CD4-positive, alpha-beta memory T cell (primary cell): ENCODE measurements at regions of chr6 and their contacts with region 1.

Region 1: GRCh38 chr6:137313928-137314855 is 95.0 kb upstream of the IFNGR1 start:
- DNase-seq: peak; percentile 47 to 66 (median 52)
- H3K4me3 ChIP-seq: no peak overlapping the region
- H3K4me3 Mint-ChIP-seq: no peak overlapping the region
- H3K27ac ChIP-seq: no peak overlapping the region
- H3K27ac Mint-ChIP-seq: peak overlapping the region in 1 of 7 donors; percentile 3
- H3K4me1 ChIP-seq: peaks cover 10% of the 10 kb centered on the region
- H3K4me1 Mint-ChIP-seq: peaks cover 2 to 12% (median 9%) of the 10 kb centered on the region in 4 donors
- H3K27me3 ChIP-seq: no peaks in the 10 kb centered on the region
- H3K27me3 Mint-ChIP-seq: no peaks in the 10 kb centered on the region

Region 2: GRCh38 chr6:136967876-136968752 is 346.1 kb before region 1 on chr6:
- CTCF ChIA-PET with region 1: interaction called, 4 read pairs
- POLR2A ChIA-PET with region 1: no interaction called
- intact Hi-C with region 1: loop called (anchors 1 kb)
- DNase-seq: peak in 4 of 5 donors; percentile 38 to 51 (median 46)
- H3K4me3 ChIP-seq: no peak overlapping the region
- H3K4me3 Mint-ChIP-seq: peak overlapping the region in 1 of 8 donors; percentile 17
- H3K27ac ChIP-seq: no peak overlapping the region
- H3K27ac Mint-ChIP-seq: peak overlapping the region in 1 of 7 donors; percentile 68
- H3K4me1 ChIP-seq: no peaks in the 10 kb centered on the region
- H3K4me1 Mint-ChIP-seq: peaks cover 0 to 10% (median 6%) of the 10 kb centered on the region in 4 donors
- H3K27me3 ChIP-seq: no peaks in the 10 kb centered on the region
- H3K27me3 Mint-ChIP-seq: peaks cover 10 to 32% of the 10 kb centered on the region in 2 donors

Region 3: GRCh38 chr6:137089305-137089704 is 224.9 kb before region 1 on chr6:
- CTCF ChIA-PET with region 1: interaction called, 62 read pairs
- POLR2A ChIA-PET with region 1: interaction called, 7 read pairs
- intact Hi-C with region 1: loop called (anchors 1 kb)
- DNase-seq: no peak
- H3K4me3 ChIP-seq: no peak overlapping the region
- H3K4me3 Mint-ChIP-seq: no peak overlapping the region
- H3K27ac ChIP-seq: no peak overlapping the region
- H3K27ac Mint-ChIP-seq: no peak overlapping the region
- H3K4me1 ChIP-seq: peaks cover 2% of the 10 kb centered on the region
- H3K4me1 Mint-ChIP-seq: peaks cover 0 to 2% (median under 1%) of the 10 kb centered on the region in 4 donors
- H3K27me3 ChIP-seq: no peaks in the 10 kb centered on the region
- H3K27me3 Mint-ChIP-seq: peaks cover 4 to 6% of the 10 kb centered on the region in 2 donors

Region 4: DNA sequence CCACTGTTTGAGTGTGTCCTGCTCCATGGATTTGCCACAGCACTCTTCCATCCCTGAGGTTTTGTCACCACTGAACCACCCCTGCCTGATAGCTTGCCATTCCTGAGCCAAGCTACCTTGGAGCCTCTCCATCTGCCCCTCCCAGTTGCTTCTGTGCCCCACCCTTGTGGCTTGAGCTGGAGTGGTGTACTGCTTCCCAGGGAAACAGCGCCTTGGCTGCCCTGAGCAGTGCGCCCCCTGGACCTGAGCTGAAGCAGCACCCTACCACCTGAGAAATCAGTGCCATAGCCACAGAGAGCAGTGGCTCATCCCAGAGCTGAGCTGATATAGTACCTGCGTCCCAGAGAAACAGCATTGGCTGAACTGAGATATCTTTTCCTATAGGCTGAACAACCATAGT is 181.1 kb before region 1 on chr6:
- CTCF ChIA-PET with region 1: interaction called, 13 read pairs
- POLR2A ChIA-PET with region 1: no interaction called
- intact Hi-C with region 1: no loop called
- DNase-seq: no peak
- H3K4me3 ChIP-seq: no peak overlapping the region
- H3K4me3 Mint-ChIP-seq: no peak overlapping the region
- H3K27ac ChIP-seq: no peak overlapping the region
- H3K27ac Mint-ChIP-seq: no peak overlapping the region
- H3K4me1 ChIP-seq: no peaks in the 10 kb centered on the region
- H3K4me1 Mint-ChIP-seq: no peaks in the 10 kb centered on the region
- H3K27me3 ChIP-seq: no peaks in the 10 kb centered on the region
- H3K27me3 Mint-ChIP-seq: peaks cover 3 to 9% of the 10 kb centered on the region in 2 donors

Region 5: DNA sequence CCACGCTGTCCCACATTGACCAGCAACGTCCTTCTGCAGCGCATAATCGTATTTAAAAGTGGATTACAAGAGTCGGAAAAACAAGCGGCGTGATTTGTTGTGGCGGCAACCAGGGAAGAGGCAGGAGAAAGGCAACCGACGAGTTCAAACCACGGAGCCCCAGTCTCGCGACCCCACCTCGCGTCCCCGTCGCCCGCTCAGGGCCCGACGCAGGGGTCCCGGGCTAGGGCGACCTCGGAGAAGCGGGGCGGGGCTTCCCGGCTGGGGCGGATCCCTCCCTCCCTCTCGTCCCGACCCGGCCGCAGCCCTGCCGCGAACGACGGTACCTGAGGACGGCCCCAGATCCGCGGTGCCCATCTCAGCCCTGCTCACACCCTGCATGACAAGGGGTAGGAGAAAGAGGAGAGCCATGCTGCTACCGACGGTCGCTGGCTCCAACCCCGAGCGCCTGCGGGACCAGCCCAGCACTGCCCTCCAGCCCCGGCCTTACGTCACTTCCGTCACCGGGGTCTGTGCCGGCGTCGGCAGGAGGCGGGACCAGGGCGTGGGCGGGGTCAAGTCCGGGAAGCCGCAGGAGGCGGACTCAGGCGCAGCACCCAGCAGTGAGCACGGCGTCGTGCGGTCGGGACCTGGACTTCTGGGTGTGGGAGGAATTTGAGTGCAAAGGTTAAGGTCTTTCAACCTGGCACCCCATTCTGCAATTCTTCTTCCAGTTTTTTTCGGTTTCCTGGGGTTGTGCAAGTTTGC is 95.1 kb before region 1 on chr6 and contains the start of gene IFNGR1:
- CTCF ChIA-PET with region 1: no interaction called
- POLR2A ChIA-PET with region 1: no interaction called
- intact Hi-C with region 1: loop called (anchors 2 kb)
- DNase-seq: peak; percentile 93 to 94 (median 94)
- H3K4me3 ChIP-seq: peak within 1 kb of the TSS; percentile 86 to 87
- H3K4me3 Mint-ChIP-seq: peak within 1 kb of the TSS; percentile 93 to 100 (median 97)
- H3K27ac ChIP-seq: peak within 1 kb of the TSS; percentile 96
- H3K27ac Mint-ChIP-seq: peak within 1 kb of the TSS; percentile 93 to 100 (median 98)
- H3K4me1 ChIP-seq: peaks cover 63% of the 10 kb centered on the region
- H3K4me1 Mint-ChIP-seq: peaks cover 45 to 74% (median 57%) of the 10 kb centered on the region in 4 donors
- H3K27me3 ChIP-seq: no peaks in the 10 kb centered on the region
- H3K27me3 Mint-ChIP-seq: peaks cover 0 to 1% of the 10 kb centered on the region in 2 donors
- total RNA-seq, gene IFNGR1: 38.3 to 38.8 TPM

Region 6: DNA sequence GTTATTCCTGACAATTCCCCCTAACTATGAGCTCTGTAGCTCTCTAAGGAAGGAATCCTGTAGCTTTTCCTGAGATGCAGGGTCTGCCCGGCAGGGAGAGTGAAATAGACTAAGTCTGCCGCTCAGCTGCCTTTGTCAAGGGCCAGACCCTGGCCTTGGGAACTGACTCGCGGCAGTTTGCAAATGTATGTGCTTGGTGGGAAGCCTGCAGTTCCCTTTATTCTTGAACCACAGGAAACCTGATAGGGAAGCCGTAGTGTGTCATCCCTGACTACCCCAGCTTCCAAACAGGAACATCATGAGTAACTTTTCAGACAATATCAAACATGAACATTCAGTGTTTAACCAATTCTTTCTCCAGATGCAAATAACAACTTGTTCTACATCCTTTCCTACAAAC is 16.3 kb before region 1 on chr6:
- CTCF ChIA-PET with region 1: interaction called, 10 read pairs
- POLR2A ChIA-PET with region 1: no interaction called
- intact Hi-C with region 1: no loop called
- DNase-seq: no peak
- H3K4me3 ChIP-seq: no peak overlapping the region
- H3K4me3 Mint-ChIP-seq: no peak overlapping the region
- H3K27ac ChIP-seq: no peak overlapping the region
- H3K27ac Mint-ChIP-seq: no peak overlapping the region
- H3K4me1 ChIP-seq: no peaks in the 10 kb centered on the region
- H3K4me1 Mint-ChIP-seq: no peaks in the 10 kb centered on the region
- H3K27me3 ChIP-seq: no peaks in the 10 kb centered on the region
- H3K27me3 Mint-ChIP-seq: peaks cover 0 to 2% of the 10 kb centered on the region in 2 donors